ENCODE measurements at regions of chr2 and their contacts with region 1.

Region 1: DNA sequence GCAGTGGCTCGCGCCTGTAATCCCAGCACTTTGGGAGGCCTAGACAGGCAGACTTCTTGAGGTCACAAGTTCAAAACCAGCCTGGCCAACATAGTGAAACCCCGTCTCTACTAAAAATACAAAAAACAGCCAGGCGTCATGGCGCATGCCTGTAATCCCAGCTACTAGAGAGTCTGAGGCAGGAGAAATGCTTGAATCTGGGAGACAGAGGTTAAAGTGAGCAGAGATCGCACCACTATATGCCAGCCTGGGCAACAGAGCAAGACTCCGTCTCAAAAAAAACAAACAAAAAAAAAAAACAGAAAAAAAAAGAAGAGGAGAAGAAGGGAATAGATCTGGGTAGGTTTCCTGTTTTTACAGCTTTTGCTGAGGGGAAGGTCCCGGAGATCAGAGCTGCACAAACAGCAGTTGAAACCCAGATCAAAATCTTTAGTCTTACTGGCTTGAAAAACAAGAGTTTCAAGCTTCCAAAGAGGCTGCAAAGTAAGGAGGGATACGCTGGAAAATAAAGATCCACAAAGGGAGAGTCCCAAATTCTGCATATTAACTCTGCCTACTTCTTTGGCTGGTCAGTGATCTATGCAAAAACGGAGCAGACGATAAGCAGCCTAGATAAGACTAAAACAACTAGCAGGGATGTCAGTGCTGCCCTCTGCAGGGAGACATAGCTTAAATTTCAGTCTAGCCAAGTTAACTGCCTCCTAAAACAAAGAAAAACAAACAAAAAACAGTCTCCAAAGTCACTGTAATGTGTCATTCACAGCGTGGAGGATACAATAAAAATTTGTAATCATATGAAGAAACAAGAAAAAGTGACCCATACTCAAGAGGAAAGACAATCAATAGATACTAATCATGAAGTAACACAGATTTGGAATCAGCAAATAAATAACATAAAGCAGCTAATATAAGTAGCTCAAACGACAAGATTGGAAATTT is 74.1 kb downstream of the TLK1 start:
- DNase-seq: peak; percentile 79
- ATAC-seq: peak; percentile 75
- H3K4me3 Mint-ChIP-seq: peak overlapping the region; percentile 69
- H3K27ac Mint-ChIP-seq: peak overlapping the region; percentile 73
- H3K4me1 Mint-ChIP-seq: peaks cover 71% of the 10 kb centered on the region
- H3K27me3 Mint-ChIP-seq: no peaks in the 10 kb centered on the region

Region 2: DNA sequence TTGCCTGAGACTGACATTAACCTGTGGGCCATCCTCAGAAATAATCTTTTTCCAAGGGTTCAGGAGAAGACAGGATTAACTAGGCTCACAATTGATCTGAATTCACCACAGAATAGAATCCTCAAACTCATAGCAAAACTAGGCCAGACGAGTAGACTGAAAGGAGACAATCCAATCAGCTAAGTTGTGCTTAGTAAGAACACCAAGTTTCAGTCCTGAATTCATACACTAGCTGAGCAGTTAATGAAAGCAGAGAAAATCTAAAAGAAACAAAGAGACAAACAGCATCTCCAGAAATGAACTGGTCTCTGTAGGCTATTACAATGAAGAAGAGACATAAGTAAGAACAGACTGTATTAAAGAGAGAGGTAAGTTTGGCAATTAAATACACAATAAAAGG is 68.1 kb before region 1 on chr2:
- CTCF ChIA-PET with region 1: interaction called, 3 read pairs
- POLR2A ChIA-PET with region 1: no interaction called
- intact Hi-C with region 1: loop called in 1 of 2 experiments (anchors 2 kb)
- DNase-seq: no peak
- ATAC-seq: peak; percentile 97
- H3K4me3 Mint-ChIP-seq: peak overlapping the region; percentile 4
- H3K27ac Mint-ChIP-seq: peak overlapping the region; percentile 63
- H3K4me1 Mint-ChIP-seq: peaks cover 43% of the 10 kb centered on the region
- H3K27me3 Mint-ChIP-seq: no peaks in the 10 kb centered on the region

Region 3: GRCh38 chr2:171072164-171072563 is 14.5 kb before region 1 on chr2:
- CTCF ChIA-PET with region 1: interaction called, 12 read pairs
- POLR2A ChIA-PET with region 1: no interaction called
- intact Hi-C with region 1: no loop called
- DNase-seq: no peak
- ATAC-seq: no peak
- H3K4me3 Mint-ChIP-seq: no peak overlapping the region
- H3K27ac Mint-ChIP-seq: no peak overlapping the region
- H3K4me1 Mint-ChIP-seq: peaks cover 20% of the 10 kb centered on the region
- H3K27me3 Mint-ChIP-seq: no peaks in the 10 kb centered on the region

Region 4: GRCh38 chr2:171136024-171136423 is 49.4 kb after region 1 on chr2:
- CTCF ChIA-PET with region 1: interaction called, 6 read pairs
- POLR2A ChIA-PET with region 1: no interaction called
- intact Hi-C with region 1: loop called in 1 of 2 experiments (anchors 5 kb)
- DNase-seq: peak; percentile 41
- ATAC-seq: peak; percentile 93
- H3K4me3 Mint-ChIP-seq: peak overlapping the region; percentile 20
- H3K27ac Mint-ChIP-seq: peak overlapping the region; percentile 86
- H3K4me1 Mint-ChIP-seq: peaks cover 73% of the 10 kb centered on the region
- H3K27me3 Mint-ChIP-seq: no peaks in the 10 kb centered on the region

Region 5: DNA sequence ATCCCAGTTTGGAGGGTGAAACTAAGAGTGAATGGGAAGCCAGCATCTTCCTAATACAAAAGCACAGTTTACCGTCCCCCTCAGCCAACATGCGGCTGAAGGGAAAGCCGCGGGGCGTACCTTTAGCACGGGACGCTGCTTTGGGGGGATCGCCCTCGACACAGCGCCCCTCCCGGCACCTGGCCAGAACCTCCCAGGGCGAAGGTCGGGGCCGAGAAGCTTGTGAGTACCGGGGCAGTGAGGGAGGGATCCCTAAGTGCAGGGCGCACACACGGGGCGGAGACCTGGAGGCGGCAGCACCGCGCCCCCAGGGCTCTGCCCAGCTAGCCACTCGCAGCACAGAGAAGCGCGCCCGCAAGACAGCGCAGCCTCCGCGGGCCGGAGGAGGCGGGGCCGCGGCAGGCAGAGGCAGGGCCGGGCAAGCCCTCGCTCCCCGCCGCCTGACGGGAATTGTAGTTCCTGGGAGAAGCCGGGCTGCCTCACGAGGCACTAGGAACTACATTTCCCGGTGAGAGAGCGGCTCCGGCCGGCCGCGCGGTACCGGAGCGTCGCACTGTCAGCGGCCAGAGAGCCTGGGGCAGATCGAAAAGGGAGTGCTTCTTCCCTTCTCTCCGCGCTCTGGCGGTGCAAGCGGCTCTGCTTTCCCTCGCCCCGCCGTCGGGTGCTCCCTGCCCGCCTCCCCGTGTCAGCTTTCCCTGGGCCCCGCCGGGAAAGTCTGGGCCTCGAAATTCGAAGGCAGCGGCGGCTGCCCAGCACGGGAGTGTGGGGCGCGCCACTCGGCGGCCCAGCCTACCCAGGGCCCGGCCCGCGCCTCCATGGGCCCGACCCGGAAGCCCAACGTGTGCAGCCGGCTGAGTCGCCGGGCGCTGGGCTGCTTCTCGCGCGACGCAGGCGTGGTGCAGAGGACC is 347.4 kb after region 1 on chr2 and contains the starts of genes DCAF17 and METTL8:
- CTCF ChIA-PET with region 1: interaction called, 3 read pairs
- POLR2A ChIA-PET with region 1: interaction called, 3 read pairs
- intact Hi-C with region 1: loop called in 1 of 2 experiments (anchors 1 kb)
- DNase-seq: peak; percentile 97
- ATAC-seq: peak; percentile 91
- H3K4me3 Mint-ChIP-seq: peak within 1 kb of the TSS; percentile 93
- H3K27ac Mint-ChIP-seq: peak within 1 kb of the TSS; percentile 95
- H3K4me1 Mint-ChIP-seq: peaks cover 50% of the 10 kb centered on the region
- H3K27me3 Mint-ChIP-seq: no peaks in the 10 kb centered on the region
- total RNA-seq, gene DCAF17: 18.3 TPM
- total RNA-seq, gene METTL8: 39.5 to 47.9 TPM

Measured in activated CD4-positive, alpha-beta T cell treated with anti-CD3 and anti-CD28 coated beads for 36 hours (primary cell).